ENCODE measurements at regions of chr6 and their contacts with region 1.

Region 1: DNA sequence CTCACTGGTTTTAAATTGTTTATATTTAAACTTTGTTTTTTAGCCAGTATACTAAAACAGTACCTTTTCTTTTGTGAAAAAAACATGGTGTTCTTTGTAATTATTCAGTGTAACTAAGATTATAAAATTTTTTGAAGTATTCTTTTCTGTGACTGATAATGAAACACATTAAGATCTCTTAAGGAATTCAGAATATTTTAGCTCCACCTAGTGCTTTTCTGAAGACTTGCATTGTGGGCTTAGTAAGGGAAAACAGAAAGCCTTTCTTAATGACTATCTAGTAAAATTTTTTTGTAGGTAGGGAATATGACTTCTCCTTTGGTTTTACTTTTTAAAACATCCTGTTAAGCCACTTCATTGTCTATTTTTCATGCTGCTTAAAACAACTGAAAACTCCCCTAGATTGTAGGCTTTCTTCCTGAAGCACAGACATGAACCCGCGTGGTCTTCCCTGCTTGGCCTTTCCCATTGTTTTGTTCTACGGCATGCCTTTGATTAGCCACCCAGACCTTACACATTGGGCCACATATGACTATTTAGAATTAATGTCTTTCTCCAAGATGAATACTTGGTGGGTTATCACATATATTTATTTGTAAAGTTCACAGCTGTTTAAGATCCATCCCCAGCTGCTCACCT is 72.1 kb downstream of the AFDN start:
- DNase-seq: peak; percentile 43
- H3K4me3 Mint-ChIP-seq: no peak overlapping the region
- H3K27ac Mint-ChIP-seq: no peak overlapping the region
- H3K4me1 Mint-ChIP-seq: peaks cover 6% of the 10 kb centered on the region
- H3K27me3 Mint-ChIP-seq: no peaks in the 10 kb centered on the region
- CTCF ChIP-seq: peak; percentile 69

Region 2: GRCh38 chr6:167485186-167485978 is 413.4 kb before region 1 on chr6:
- CTCF ChIA-PET with region 1: no interaction called
- POLR2A ChIA-PET with region 1: no interaction called
- intact Hi-C with region 1: loop called (anchors 1 kb)
- DNase-seq: peak; percentile 23
- H3K4me3 Mint-ChIP-seq: no peak overlapping the region
- H3K27ac Mint-ChIP-seq: no peak overlapping the region
- H3K4me1 Mint-ChIP-seq: peaks cover 5% of the 10 kb centered on the region
- H3K27me3 Mint-ChIP-seq: peaks cover 64% of the 10 kb centered on the region
- CTCF ChIP-seq: no peak

Region 3: DNA sequence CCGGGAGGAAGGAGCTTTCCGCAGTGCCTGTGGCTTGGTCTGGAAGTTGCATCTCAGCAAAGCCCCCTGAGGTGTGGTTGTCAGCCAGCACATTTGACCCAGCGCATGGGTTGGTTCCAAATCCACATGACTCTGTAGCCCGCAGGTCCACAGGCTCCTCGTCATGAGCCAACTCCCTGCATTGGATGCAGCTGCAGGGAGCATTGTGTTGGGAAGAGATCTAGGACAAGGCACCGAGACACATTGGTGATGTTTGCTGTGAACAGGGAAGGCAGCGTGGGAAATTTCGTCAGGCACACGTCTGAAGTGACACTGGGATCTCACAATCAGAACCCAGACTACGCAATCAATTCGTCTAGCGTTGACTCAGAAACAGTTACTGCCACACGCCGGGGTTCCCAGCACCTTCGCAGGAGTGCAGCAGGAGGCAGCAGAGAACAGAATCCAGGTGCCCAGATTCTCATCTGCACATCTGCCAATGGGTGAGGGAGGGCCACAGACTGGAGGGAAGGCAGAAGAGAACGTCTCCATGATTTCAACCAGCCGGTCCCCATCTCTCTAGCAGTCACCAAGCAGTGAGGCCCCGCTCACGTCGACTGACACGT is 396.9 kb before region 1 on chr6:
- CTCF ChIA-PET with region 1: interaction called, 5 read pairs
- POLR2A ChIA-PET with region 1: no interaction called
- intact Hi-C with region 1: loop called (anchors 1 kb)
- DNase-seq: peak; percentile 56
- H3K4me3 Mint-ChIP-seq: no peak overlapping the region
- H3K27ac Mint-ChIP-seq: no peak overlapping the region
- H3K4me1 Mint-ChIP-seq: no peaks in the 10 kb centered on the region
- H3K27me3 Mint-ChIP-seq: peaks cover 31% of the 10 kb centered on the region
- CTCF ChIP-seq: peak; percentile 17